Naive thymus-derived CD4-positive, alpha-beta T cell (primary cell): ENCODE measurements at regions of chr2 and their contacts with region 1.

Region 1: GRCh38 chr2:207529330-207530159 is at the start of gene CREB1:
- DNase-seq: peak; percentile 99 to 100 (median 100)
- ATAC-seq: peak; percentile 87
- H3K4me3 ChIP-seq: peak within 1 kb of the TSS; percentile 75
- H3K4me3 Mint-ChIP-seq: peak within 1 kb of the TSS; percentile 95 to 100 (median 99)
- H3K27ac ChIP-seq: peak within 1 kb of the TSS; percentile 100
- H3K27ac Mint-ChIP-seq: peak within 1 kb of the TSS; percentile 98 to 100 (median 100)
- H3K4me1 ChIP-seq: peaks cover 52 to 59% of the 10 kb centered on the region in 2 donors
- H3K4me1 Mint-ChIP-seq: peaks cover 45 to 85% (median 69%) of the 10 kb centered on the region in 7 donors
- H3K27me3 ChIP-seq: no peaks in the 10 kb centered on the region
- H3K27me3 Mint-ChIP-seq: peaks cover 0 to 7% (median 0%) of the 10 kb centered on the region in 5 donors
- total RNA-seq, gene CREB1: 89.7 to 141 (median 115) TPM

Region 2: GRCh38 chr2:206159346-206160124 is 1370.0 kb before region 1 on chr2 and contains the starts of genes EEF1B2 and NDUFS1:
- CTCF ChIA-PET with region 1: no interaction called
- POLR2A ChIA-PET with region 1: interaction called, 5 read pairs
- intact Hi-C with region 1: loop called in 1 of 2 experiments (anchors 1 kb)
- DNase-seq: peak; percentile 88 to 97 (median 96)
- ATAC-seq: peak; percentile 94
- H3K4me3 ChIP-seq: peak within 1 kb of the TSS; percentile 95
- H3K4me3 Mint-ChIP-seq: peak within 1 kb of the TSS; percentile 95 to 100 (median 98)
- H3K27ac ChIP-seq: peak within 1 kb of the TSS; percentile 96
- H3K27ac Mint-ChIP-seq: peak within 1 kb of the TSS; percentile 97 to 99 (median 99)
- H3K4me1 ChIP-seq: peaks cover 19 to 29% of the 10 kb centered on the region in 2 donors
- H3K4me1 Mint-ChIP-seq: peaks cover 36 to 78% (median 62%) of the 10 kb centered on the region in 7 donors
- H3K27me3 ChIP-seq: no peaks in the 10 kb centered on the region
- H3K27me3 Mint-ChIP-seq: no peaks in the 10 kb centered on the region
- total RNA-seq, gene EEF1B2: 542 to 1,236 (median 1,148) TPM
- total RNA-seq, gene NDUFS1: 37.3 to 61.9 (median 56.3) TPM

Region 3: DNA sequence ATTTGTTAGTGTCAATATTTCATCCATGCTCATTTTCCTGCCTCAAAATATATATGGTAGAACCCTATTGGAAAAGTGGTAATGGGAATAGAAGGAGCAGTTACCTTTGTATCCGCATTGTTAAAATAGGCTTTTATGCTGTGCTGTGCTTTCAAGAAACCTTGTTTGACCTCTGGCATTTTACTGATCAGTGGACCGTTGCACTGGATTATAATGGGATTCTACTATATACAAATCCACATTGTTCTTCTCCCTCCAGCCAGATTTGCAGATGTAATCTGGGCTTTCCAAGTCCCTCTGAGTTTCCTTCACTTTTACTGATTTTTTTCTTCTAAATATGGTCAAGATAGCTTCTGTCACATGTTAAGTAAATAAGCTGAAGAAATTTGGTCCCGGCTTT is 910.5 kb before region 1 on chr2:
- CTCF ChIA-PET with region 1: no interaction called
- POLR2A ChIA-PET with region 1: no interaction called
- intact Hi-C with region 1: no loop called
- DNase-seq: no peak
- ATAC-seq: no peak
- H3K4me3 ChIP-seq: no peak overlapping the region
- H3K4me3 Mint-ChIP-seq: no peak overlapping the region
- H3K27ac ChIP-seq: no peak overlapping the region
- H3K27ac Mint-ChIP-seq: no peak overlapping the region
- H3K4me1 ChIP-seq: no peaks in the 10 kb centered on the region
- H3K4me1 Mint-ChIP-seq: no peaks in the 10 kb centered on the region
- H3K27me3 ChIP-seq: no peaks in the 10 kb centered on the region
- H3K27me3 Mint-ChIP-seq: peaks cover 0 to 8% (median under 1%) of the 10 kb centered on the region in 5 donors

Region 4: DNA sequence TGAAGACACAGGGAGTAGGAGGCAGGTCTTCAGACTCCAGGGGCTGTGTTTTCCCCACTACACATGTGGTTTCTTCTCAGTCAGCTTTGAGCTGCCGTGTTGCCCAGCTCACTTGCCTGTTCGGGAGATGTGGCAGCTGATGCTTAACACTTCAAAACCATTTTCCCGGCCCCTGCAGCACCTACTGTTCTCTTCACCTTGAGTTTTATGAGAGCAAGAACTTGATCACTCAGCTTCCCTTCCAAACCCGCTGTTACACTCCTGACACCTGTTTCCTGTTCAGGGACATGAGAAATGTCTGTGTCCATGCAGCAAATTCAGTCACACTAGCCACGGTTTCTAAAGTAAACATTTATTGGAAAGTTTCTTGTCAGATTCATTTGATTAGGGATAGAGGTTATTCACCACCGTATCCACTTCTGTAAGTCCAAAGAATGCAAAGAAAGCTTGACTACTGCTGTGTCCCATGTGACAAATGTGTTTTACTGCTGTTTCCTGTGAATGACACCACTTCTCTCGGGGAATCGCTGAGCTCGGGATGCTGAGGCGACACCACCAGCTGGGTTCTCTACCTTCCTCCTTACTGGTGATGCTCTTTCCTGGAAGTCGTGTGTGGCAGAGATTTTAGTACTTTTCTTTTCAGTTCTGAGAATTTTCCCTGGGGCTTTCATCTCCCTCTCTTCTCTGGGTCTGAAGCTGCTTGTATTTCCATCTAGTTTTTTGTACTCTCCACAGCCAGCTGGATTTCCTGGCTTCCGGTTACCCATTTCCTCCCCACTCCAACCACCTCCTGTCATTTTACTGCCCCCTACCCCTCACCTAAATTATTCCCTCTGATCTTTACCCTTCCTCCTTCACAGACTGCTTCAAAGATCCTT is 455.5 kb before region 1 on chr2:
- CTCF ChIA-PET with region 1: no interaction called
- POLR2A ChIA-PET with region 1: interaction called, 3 read pairs
- intact Hi-C with region 1: loop called in 1 of 2 experiments (anchors 5 kb)
- DNase-seq: peak in 6 of 9 donors; percentile 10 to 30 (median 22)
- ATAC-seq: peak; percentile 58
- H3K4me3 ChIP-seq: no peak overlapping the region
- H3K4me3 Mint-ChIP-seq: peak overlapping the region; percentile 1 to 80 (median 62)
- H3K27ac ChIP-seq: no peak overlapping the region
- H3K27ac Mint-ChIP-seq: peak overlapping the region; percentile 36 to 81 (median 74)
- H3K4me1 ChIP-seq: peaks cover 3 to 11% of the 10 kb centered on the region in 2 donors
- H3K4me1 Mint-ChIP-seq: peaks cover 25 to 44% (median 35%) of the 10 kb centered on the region in 7 donors
- H3K27me3 ChIP-seq: no peaks in the 10 kb centered on the region
- H3K27me3 Mint-ChIP-seq: peaks cover 0 to 4% (median 0%) of the 10 kb centered on the region in 5 donors

Region 5: GRCh38 chr2:207321514-207321913 is 208.0 kb before region 1 on chr2:
- CTCF ChIA-PET with region 1: no interaction called
- POLR2A ChIA-PET with region 1: no interaction called
- intact Hi-C with region 1: no loop called
- DNase-seq: no peak
- ATAC-seq: no peak
- H3K4me3 ChIP-seq: no peak overlapping the region
- H3K4me3 Mint-ChIP-seq: no peak overlapping the region
- H3K27ac ChIP-seq: no peak overlapping the region
- H3K27ac Mint-ChIP-seq: no peak overlapping the region
- H3K4me1 ChIP-seq: no peaks in the 10 kb centered on the region
- H3K4me1 Mint-ChIP-seq: peaks cover 0 to 17% (median 0%) of the 10 kb centered on the region in 7 donors
- H3K27me3 ChIP-seq: no peaks in the 10 kb centered on the region
- H3K27me3 Mint-ChIP-seq: peaks cover 0 to 11% (median 0%) of the 10 kb centered on the region in 5 donors

Region 6: DNA sequence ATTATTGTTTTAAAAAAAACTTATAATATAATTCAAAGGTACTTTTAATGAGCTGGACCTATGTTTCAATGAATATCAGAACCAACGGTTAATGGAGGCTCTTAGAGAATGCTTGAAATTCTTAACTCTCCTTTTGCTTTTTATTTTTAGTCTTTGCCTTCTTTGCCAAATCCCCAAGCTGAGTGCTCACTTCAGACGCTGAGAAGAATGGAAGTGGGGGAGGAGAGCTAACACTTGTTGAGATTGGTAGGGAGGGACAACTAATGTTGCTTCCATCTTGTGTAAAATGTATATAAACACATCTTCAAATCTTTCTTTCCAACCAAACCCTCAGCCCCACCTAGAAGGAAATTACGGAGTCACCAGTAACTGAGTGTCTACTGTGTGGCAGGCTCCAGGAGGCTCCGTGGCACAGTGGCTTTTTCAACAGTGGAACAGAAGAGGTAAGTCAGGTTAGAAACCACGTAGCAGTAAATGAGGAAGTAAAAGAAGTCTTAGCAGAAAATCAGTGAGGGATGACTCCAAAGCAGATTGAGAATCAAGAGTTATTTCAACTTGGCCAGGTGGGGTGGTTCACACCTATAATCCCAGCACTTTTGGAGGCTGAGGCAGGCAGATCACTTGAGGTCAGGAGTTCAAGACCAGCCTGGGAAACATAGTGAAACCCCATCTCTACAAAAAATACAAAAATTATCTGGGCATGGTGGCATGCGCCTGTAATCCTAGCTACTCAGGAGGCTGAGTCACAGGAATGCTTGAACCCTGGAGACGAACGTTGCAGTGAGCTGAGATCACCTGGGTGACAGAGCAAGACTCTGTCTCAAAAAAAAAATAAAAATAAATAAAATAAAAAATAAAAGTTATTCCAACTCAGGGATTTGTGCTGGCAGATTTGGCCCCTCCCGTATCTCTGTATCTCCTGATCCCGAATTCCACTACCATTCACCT is 44.8 kb before region 1 on chr2:
- CTCF ChIA-PET with region 1: no interaction called
- POLR2A ChIA-PET with region 1: interaction called, 3 read pairs
- intact Hi-C with region 1: loop called (anchors 1 to 5 kb)
- DNase-seq: no peak
- ATAC-seq: no peak
- H3K4me3 ChIP-seq: no peak overlapping the region
- H3K4me3 Mint-ChIP-seq: no peak overlapping the region
- H3K27ac ChIP-seq: no peak overlapping the region
- H3K27ac Mint-ChIP-seq: peak overlapping the region in 1 of 9 donors; percentile 62
- H3K4me1 ChIP-seq: peaks cover 0 to 13% of the 10 kb centered on the region in 2 donors
- H3K4me1 Mint-ChIP-seq: peaks cover 0 to 37% (median 30%) of the 10 kb centered on the region in 7 donors
- H3K27me3 ChIP-seq: no peaks in the 10 kb centered on the region
- H3K27me3 Mint-ChIP-seq: no peaks in the 10 kb centered on the region

Region 7: GRCh38 chr2:207546822-207547221 is 17.3 kb after region 1 on chr2:
- CTCF ChIA-PET with region 1: interaction called, 4 read pairs
- POLR2A ChIA-PET with region 1: interaction called, 20 read pairs
- intact Hi-C with region 1: loop called in 1 of 2 experiments (anchors 2 kb)
- DNase-seq: no peak
- ATAC-seq: no peak
- H3K4me3 ChIP-seq: no peak overlapping the region
- H3K4me3 Mint-ChIP-seq: peak overlapping the region in 3 of 10 donors; percentile 3 to 50 (median 19)
- H3K27ac ChIP-seq: no peak overlapping the region
- H3K27ac Mint-ChIP-seq: peak overlapping the region in 3 of 9 donors; percentile 10 to 23 (median 15)
- H3K4me1 ChIP-seq: peaks cover under 1 to 11% of the 10 kb centered on the region in 2 donors
- H3K4me1 Mint-ChIP-seq: peaks cover 29 to 89% (median 78%) of the 10 kb centered on the region in 7 donors
- H3K27me3 ChIP-seq: no peaks in the 10 kb centered on the region
- H3K27me3 Mint-ChIP-seq: no peaks in the 10 kb centered on the region

Region 8: DNA sequence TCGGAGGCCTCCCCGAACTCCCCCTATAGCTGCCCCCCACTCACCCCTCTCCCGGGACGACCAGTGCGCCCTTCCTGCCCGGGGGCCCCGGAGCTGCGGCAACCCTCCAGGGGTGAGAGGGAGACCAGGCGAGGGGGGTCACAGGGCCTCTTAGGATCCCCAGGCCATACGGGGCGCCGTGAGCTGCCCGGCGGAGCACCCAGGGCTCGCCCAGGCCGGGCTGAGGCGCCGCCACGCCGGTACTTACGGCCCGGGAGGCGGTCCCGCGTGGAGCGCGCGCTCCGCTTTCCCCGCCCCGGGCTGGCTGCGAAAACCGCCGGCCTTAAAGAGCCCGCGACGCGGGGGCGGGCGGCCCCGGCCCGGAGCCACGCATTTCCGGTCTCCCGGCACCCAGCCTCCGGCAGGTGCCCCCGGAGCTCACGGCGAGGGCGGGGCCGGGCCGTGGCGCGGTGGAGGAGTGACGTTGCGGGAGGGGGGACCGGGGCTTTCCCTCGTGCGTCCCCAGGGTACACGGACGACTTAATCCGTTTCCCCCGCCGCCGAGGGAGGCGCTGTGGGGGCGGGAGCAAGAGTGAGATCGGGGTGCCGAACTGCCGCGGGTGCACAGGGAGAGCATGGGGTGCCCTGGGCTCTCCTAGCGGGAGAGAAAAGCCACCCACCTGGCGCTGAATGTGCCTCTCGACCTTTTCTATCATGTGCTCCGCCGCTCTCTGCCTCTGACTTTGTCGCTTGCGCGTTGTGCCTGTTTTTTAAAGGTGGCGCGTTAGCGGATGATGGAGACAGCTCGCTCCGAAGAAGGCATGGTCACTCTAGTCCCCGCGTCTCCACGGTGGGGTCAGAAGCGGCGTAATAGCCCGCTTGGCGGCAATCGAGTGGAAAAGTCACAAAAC is 95.7 kb after region 1 on chr2 and contains the start of gene METTL21A:
- CTCF ChIA-PET with region 1: interaction called, 6 read pairs
- POLR2A ChIA-PET with region 1: interaction called, 89 read pairs
- intact Hi-C with region 1: loop called (anchors 1 kb)
- DNase-seq: peak; percentile 91 to 97 (median 95)
- ATAC-seq: peak; percentile 91
- H3K4me3 ChIP-seq: peak within 1 kb of the TSS; percentile 92
- H3K4me3 Mint-ChIP-seq: peak within 1 kb of the TSS; percentile 93 to 96 (median 94)
- H3K27ac ChIP-seq: peak within 1 kb of the TSS; percentile 99
- H3K27ac Mint-ChIP-seq: peak within 1 kb of the TSS; percentile 86 to 96 (median 95)
- H3K4me1 ChIP-seq: peaks cover 4 to 10% of the 10 kb centered on the region in 2 donors
- H3K4me1 Mint-ChIP-seq: peaks cover 32 to 52% (median 40%) of the 10 kb centered on the region in 7 donors
- H3K27me3 ChIP-seq: no peaks in the 10 kb centered on the region
- H3K27me3 Mint-ChIP-seq: peaks cover 0 to 2% (median 0%) of the 10 kb centered on the region in 5 donors
- total RNA-seq, gene METTL21A: 14.6 to 20.5 (median 19.6) TPM

Region 9: DNA sequence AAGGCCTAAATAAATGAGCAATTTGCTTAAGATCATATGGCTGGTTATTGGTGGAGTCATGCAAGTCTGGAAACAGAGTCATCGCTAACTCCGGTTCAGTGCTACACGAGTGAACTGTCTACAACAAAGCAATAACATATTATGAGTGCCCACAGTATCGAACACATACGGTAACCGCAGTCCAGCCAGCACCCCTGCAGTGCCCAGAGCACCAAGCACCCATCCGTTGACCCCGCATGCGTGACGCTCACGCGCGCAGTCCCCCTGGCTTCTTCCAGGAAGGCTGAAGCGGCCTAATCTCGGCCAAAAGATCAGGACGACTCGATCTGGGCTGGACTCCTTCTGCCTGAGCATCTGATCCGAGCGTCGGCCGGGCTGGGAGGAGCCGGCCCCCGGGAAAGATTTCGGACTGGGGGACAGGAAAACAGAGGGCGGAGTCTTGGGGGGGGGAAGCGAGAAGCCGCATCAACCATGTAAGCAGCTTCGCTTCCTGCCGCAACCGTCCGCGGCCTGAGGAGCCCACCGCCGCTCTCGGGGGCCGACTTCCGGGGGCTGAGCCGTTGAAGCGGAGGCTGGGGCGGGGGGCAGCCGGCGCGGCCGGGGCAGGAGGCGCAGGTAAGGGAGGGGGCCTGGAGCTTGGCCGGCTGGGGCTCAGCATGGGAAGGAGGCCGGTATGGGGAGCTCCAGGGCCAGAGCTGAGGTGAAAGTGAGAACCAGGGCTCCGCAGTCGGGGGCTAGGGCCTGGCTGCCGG is 736.4 kb after region 1 on chr2 and contains the start of gene PIKFYVE:
- CTCF ChIA-PET with region 1: no interaction called
- POLR2A ChIA-PET with region 1: interaction called, 4 read pairs
- intact Hi-C with region 1: loop called (anchors 1 kb)
- DNase-seq: peak; percentile 63 to 87 (median 83)
- ATAC-seq: peak; percentile 94
- H3K4me3 ChIP-seq: peak within 1 kb of the TSS; percentile 97
- H3K4me3 Mint-ChIP-seq: peak within 1 kb of the TSS; percentile 90 to 99 (median 96)
- H3K27ac ChIP-seq: peak within 1 kb of the TSS; percentile 83
- H3K27ac Mint-ChIP-seq: peak within 1 kb of the TSS; percentile 87 to 98 (median 95)
- H3K4me1 ChIP-seq: peaks cover 12 to 16% of the 10 kb centered on the region in 2 donors
- H3K4me1 Mint-ChIP-seq: peaks cover 9 to 60% (median 53%) of the 10 kb centered on the region in 7 donors
- H3K27me3 ChIP-seq: no peaks in the 10 kb centered on the region
- H3K27me3 Mint-ChIP-seq: peaks cover 0 to 5% (median 0%) of the 10 kb centered on the region in 5 donors
- total RNA-seq, gene PIKFYVE: 33.4 to 52.3 (median 39.1) TPM